T-cell (primary cell): ENCODE measurements at regions of chr13 and their contacts with region 1.

Region 1: GRCh38 chr13:77456271-77456670 is 79.2 kb upstream of the SCEL start:
- DNase-seq: no peak
- ATAC-seq: no peak
- H3K4me3 ChIP-seq: no peak overlapping the region
- H3K4me3 Mint-ChIP-seq: no peak overlapping the region
- H3K27ac ChIP-seq: no peak overlapping the region
- H3K27ac Mint-ChIP-seq: no peak overlapping the region
- H3K4me1 ChIP-seq: no peaks in the 10 kb centered on the region
- H3K4me1 Mint-ChIP-seq: no peaks in the 10 kb centered on the region
- H3K27me3 ChIP-seq: no peaks in the 10 kb centered on the region
- H3K27me3 Mint-ChIP-seq: peaks cover 0 to 10% of the 10 kb centered on the region in 2 donors

Region 2: GRCh38 chr13:77383097-77383496 is 73.2 kb before region 1 on chr13:
- CTCF ChIA-PET with region 1: no interaction called
- POLR2A ChIA-PET with region 1: no interaction called
- DNase-seq: no peak
- ATAC-seq: no peak
- H3K4me3 ChIP-seq: no peak overlapping the region
- H3K4me3 Mint-ChIP-seq: no peak overlapping the region
- H3K27ac ChIP-seq: no peak overlapping the region
- H3K27ac Mint-ChIP-seq: no peak overlapping the region
- H3K4me1 ChIP-seq: no peaks in the 10 kb centered on the region
- H3K4me1 Mint-ChIP-seq: no peaks in the 10 kb centered on the region
- H3K27me3 ChIP-seq: no peaks in the 10 kb centered on the region
- H3K27me3 Mint-ChIP-seq: no peaks in the 10 kb centered on the region

Region 3: GRCh38 chr13:77857531-77858209 is 401.4 kb after region 1 on chr13:
- CTCF ChIA-PET with region 1: no interaction called
- POLR2A ChIA-PET with region 1: interaction called in 1 of 2 experiments, 11 read pairs
- DNase-seq: no peak
- ATAC-seq: no peak
- H3K4me3 ChIP-seq: no peak overlapping the region
- H3K4me3 Mint-ChIP-seq: no peak overlapping the region
- H3K27ac ChIP-seq: no peak overlapping the region
- H3K27ac Mint-ChIP-seq: no peak overlapping the region
- H3K4me1 ChIP-seq: no peaks in the 10 kb centered on the region
- H3K4me1 Mint-ChIP-seq: no peaks in the 10 kb centered on the region
- H3K27me3 ChIP-seq: no peaks in the 10 kb centered on the region
- H3K27me3 Mint-ChIP-seq: peaks cover 0 to 3% of the 10 kb centered on the region in 2 donors